Endothelial cell of umbilical vein (primary cell): ENCODE measurements at regions of chr11 and their contacts with region 1.

Region 1: GRCh38 chr11:18526521-18527296 is at the start of gene TSG101:
- DNase-seq: peak; percentile 98
- H3K4me3 ChIP-seq: peak within 1 kb of the TSS; percentile 51 to 96 (median 74)
- H3K27ac ChIP-seq: peak within 1 kb of the TSS; percentile 99
- H3K4me1 ChIP-seq: peaks cover 15% of the 10 kb centered on the region
- H3K27me3 ChIP-seq: no peaks in the 10 kb centered on the region
- CTCF ChIP-seq: no peak
- POLR2A ChIP-seq: peak; percentile 96
- total RNA-seq, gene TSG101: 41.3 and 45.5 TPM in 2 replicates

Region 2: GRCh38 chr11:18588297-18589252 is 61.9 kb after region 1 on chr11 and contains the start of gene UEVLD:
- CTCF ChIA-PET with region 1: no interaction called
- POLR2A ChIA-PET with region 1: interaction called, 4 read pairs
- dilution Hi-C with region 1: no loop called
- intact Hi-C with region 1: loop called (anchors 2 kb)
- DNase-seq: peak; percentile 88
- H3K4me3 ChIP-seq: peak within 1 kb of the TSS; percentile 91 to 98 (median 94)
- H3K27ac ChIP-seq: peak within 1 kb of the TSS; percentile 65
- H3K4me1 ChIP-seq: peaks cover 17% of the 10 kb centered on the region
- H3K27me3 ChIP-seq: no peaks in the 10 kb centered on the region
- CTCF ChIP-seq: no peak
- POLR2A ChIP-seq: peak; percentile 87
- total RNA-seq, gene UEVLD: 19.1 and 22.5 TPM in 2 replicates

Region 3: DNA sequence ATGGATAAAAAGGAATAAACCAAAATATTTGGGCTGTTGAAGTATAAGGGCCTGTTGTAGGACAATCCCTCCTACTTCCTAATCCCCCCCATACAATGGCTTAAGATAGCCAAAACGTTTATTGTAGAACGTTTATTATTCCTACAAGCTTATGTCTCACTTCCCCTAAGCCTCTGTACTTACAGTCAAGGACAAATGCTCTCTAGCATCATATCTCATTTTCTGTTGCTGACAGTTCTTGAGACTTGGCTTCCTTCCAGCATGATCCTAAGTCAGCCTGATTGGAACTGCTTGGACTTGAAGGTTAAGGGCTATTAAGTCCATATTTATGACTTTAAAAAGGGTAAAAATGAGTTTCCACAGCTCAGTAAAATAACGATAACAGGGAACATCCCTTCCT is 81.7 kb after region 1 on chr11:
- CTCF ChIA-PET with region 1: no interaction called
- POLR2A ChIA-PET with region 1: no interaction called
- dilution Hi-C with region 1: no loop called
- intact Hi-C with region 1: no loop called
- DNase-seq: peak; percentile 56
- H3K4me3 ChIP-seq: no peak overlapping the region
- H3K27ac ChIP-seq: no peak overlapping the region
- H3K4me1 ChIP-seq: peaks cover 6% of the 10 kb centered on the region
- H3K27me3 ChIP-seq: no peaks in the 10 kb centered on the region
- CTCF ChIP-seq: no peak
- POLR2A ChIP-seq: no peak